Activated T-helper 1 cell treated with anti-CD3 and anti-CD28 coated beads, Interleukin-12 subunit alpha, Interleukin-12 subunit beta, Interleukin-2, Interleukin-4 antibody, amounts not matched to agents 30 ng/mL and 10 ng/mL and 1 ng/mL, durations not matched to agents 14 hours and 24 hours and 36 hours (primary cell): ENCODE measurements at regions of chr1 and their contacts with region 1.

Region 1: DNA sequence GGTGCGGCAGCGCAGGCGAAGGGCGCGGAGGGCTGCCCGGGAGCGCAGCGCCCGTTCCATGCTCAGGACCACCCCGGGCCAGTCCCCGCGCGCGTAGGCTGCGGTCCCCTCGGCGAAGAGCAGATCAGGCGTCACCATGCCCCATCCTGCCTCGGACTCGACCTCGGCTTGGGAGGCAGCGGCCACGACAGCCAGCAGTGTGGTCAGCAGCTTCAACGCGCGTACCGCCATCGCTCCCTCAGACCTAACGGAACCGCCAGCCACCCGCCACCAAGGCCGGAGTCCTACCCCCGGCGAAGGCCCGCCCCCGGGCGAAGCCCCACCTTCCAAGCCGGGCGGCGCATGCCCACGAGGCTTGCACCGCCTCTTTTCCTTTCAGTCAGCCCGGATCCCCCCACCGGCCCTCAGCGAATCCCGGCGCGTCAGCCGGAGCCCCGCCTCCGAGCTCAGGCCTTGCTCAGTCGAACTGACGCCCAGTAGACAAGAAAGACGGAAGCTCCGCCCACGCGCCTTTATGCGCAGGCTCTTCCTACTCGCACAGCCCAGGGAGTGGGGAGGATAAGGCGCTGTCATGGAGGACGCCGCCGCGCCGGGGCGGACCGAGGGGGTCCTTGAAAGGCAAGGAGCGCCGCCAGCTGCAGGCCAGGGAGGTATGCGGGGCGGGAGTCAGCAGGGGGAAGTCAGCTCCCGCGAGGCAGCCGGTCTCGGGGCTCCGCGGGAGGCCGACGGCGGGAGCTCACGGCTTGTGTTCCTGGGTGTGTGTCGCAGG is at the starts of genes C1orf50 and P3H1:
- DNase-seq: peak; percentile 100
- H3K4me3 Mint-ChIP-seq: no peak within 1 kb of the TSS
- H3K27ac Mint-ChIP-seq: peak within 1 kb of the TSS; percentile 93
- H3K4me1 Mint-ChIP-seq: peaks cover 21% of the 10 kb centered on the region
- H3K27me3 Mint-ChIP-seq: no peaks in the 10 kb centered on the region
- total RNA-seq, gene C1orf50: 6.4 and 7.6 TPM in 2 replicates
- total RNA-seq, gene P3H1: 44.9 and 51.4 TPM in 2 replicates

Region 2: GRCh38 chr1:42335050-42335808 is 431.7 kb before region 1 on chr1 and contains the start of gene FOXJ3:
- intact Hi-C with region 1: loop called (anchors 5 kb)
- DNase-seq: peak; percentile 87
- H3K4me3 Mint-ChIP-seq: peak within 1 kb of the TSS; percentile 90
- H3K27ac Mint-ChIP-seq: peak within 1 kb of the TSS; percentile 91
- H3K4me1 Mint-ChIP-seq: peaks cover 47% of the 10 kb centered on the region
- H3K27me3 Mint-ChIP-seq: no peaks in the 10 kb centered on the region
- total RNA-seq, gene FOXJ3: 50.1 and 51.6 TPM in 2 replicates

Region 3: DNA sequence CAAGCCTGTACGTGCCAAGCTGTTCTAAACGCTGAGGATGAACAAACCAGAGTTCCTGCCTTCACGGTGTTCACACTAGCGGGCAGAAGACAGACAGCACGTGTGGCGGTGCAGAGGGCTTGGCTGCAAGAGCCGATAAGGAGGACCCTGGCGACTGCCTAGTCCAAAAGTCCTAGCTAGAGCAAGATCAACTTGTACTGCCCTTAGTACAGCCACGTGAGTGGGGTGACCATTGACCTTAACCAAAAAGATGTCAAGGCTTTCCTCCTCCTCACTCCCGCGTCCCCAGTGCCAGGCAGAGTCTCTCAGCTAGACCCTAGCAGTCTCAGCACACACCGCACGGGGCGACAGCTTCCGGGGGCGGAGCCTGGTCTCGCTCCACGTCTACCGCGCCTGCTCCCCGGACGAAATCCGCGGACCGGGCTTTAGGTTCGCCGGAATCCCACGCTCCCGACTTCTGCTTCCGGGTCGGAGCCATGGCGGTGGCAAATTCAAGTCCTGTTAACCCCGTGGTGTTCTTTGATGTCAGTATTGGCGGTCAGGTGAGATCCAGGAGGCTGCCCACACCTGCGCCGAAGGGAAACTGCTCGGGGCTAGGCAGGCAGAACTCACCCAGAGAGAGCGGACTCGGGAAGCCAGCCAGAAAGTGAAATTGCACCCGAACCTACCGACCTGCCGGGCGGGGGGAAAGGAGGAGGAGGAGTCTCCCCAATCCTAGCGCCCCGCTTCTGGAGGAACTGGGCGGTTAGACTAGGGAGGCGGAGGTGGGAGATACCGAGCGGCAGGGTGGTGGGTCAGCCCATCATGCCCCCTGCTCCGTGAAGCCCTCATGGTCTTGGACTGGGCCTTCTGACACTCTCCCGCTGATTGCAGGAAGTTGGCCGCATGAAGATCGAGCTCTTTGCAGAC is 108.7 kb before region 1 on chr1 and contains the start of gene PPIH:
- intact Hi-C with region 1: loop called (anchors 2 kb)
- DNase-seq: peak; percentile 94
- H3K4me3 Mint-ChIP-seq: peak within 1 kb of the TSS; percentile 99
- H3K27ac Mint-ChIP-seq: peak within 1 kb of the TSS; percentile 96
- H3K4me1 Mint-ChIP-seq: peaks cover 46% of the 10 kb centered on the region
- H3K27me3 Mint-ChIP-seq: peaks cover 3% of the 10 kb centered on the region
- total RNA-seq, gene PPIH: 89.7 and 94.6 TPM in 2 replicates

Region 4: GRCh38 chr1:42777852-42778251 is 10.9 kb after region 1 on chr1:
- intact Hi-C with region 1: loop called (anchors 1 kb)
- DNase-seq: peak; percentile 12
- H3K4me3 Mint-ChIP-seq: no peak overlapping the region
- H3K27ac Mint-ChIP-seq: no peak overlapping the region
- H3K4me1 Mint-ChIP-seq: peaks cover 30% of the 10 kb centered on the region
- H3K27me3 Mint-ChIP-seq: no peaks in the 10 kb centered on the region

Region 5: GRCh38 chr1:42846257-42847110 is 79.6 kb after region 1 on chr1 and contains the start of gene ZNF691:
- intact Hi-C with region 1: loop called (anchors 1 kb)
- DNase-seq: peak; percentile 86
- H3K4me3 Mint-ChIP-seq: peak within 1 kb of the TSS; percentile 97
- H3K27ac Mint-ChIP-seq: peak within 1 kb of the TSS; percentile 78
- H3K4me1 Mint-ChIP-seq: peaks cover 41% of the 10 kb centered on the region
- H3K27me3 Mint-ChIP-seq: no peaks in the 10 kb centered on the region
- total RNA-seq, gene ZNF691: 10.0 and 12.9 TPM in 2 replicates

Region 6: DNA sequence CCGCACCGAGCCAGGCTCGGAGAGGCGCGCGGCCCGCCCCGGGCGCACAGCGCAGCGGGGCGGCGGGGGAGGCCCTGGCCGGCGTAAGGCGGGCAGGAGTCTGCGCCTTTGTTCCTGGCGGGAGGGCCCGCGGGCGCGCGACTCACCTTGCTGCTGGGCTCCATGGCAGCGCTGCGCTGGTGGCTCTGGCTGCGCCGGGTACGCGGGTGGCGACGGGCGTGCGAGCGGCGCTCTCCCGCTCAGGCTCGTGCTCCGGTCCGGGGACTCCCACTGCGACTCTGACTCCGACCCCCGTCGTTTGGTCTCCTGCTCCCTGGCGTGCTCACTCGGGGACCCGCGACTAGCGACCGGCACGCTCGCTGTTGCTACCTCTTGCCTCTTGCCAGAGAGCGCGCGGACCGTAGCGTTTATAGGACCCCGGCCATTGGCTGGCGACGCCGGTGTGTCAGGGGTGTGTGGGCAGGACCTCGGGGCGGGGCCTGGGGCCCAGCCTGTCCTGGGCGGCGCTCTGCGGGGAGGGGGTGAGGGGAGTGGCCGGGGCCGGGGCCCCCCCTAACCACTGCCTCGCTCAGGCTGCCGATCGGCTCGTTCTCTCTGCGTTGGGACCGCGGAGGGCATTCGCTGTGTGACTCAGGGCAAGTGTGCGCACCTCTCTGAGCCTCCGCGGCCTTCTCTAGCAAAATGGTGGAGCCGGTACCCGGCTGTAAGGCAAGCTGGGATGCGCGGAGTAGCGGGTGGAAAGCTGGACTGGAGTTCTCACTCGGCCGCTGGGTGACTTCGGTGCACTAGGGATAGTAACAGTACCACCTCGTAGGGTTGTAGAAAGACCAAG is 191.8 kb after region 1 on chr1 and contains the start of gene SLC2A1:
- intact Hi-C with region 1: loop called (anchors 1 kb)
- DNase-seq: peak; percentile 93
- H3K4me3 Mint-ChIP-seq: peak within 1 kb of the TSS; percentile 97
- H3K27ac Mint-ChIP-seq: peak within 1 kb of the TSS; percentile 100
- H3K4me1 Mint-ChIP-seq: peaks cover 51% of the 10 kb centered on the region
- H3K27me3 Mint-ChIP-seq: peaks cover 6% of the 10 kb centered on the region
- total RNA-seq, gene SLC2A1: 111 and 120 TPM in 2 replicates

Region 7: DNA sequence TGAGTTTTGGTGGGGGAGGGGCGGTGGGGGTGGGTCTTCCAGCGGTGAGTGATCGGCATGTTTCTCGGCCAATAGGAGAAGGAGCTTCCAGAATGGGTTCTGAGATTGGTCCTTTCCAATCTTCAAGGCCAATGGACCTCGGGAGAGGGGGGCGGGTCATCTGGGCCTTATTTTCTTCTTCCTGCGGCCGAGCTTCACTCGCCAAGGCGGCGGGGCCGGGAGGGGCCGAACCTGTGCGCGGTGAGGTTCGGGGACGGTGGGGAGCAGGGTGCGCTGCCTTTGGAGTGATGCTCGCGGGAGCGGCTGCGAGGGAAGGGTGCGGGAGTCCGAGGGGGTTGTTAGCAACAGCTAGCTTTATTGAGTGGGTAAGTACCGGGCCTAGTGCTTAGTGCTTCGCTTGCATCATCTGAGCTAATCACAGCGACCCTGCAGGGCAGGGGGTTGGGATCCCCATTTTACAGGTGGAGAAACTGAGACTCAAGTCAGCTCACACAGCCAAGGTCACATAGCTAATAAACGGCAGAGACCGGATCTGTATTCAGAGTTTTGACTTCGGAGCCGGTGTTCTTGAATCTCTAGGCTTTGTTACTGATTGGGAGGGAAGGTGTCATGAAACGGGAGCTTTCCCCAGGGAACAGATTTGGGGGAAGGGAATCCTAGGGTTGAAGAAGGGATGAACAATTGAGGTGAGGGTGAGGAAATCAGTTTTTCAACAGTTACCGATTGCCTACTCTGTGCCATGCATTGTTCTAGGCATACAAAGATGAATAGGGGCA is 883.6 kb after region 1 on chr1:
- intact Hi-C with region 1: loop called (anchors 1 kb)
- DNase-seq: peak; percentile 89
- H3K4me3 Mint-ChIP-seq: peak overlapping the region; percentile 98
- H3K27ac Mint-ChIP-seq: peak overlapping the region; percentile 98
- H3K4me1 Mint-ChIP-seq: peaks cover 27% of the 10 kb centered on the region
- H3K27me3 Mint-ChIP-seq: peaks cover under 1% of the 10 kb centered on the region